Endothelial cell of umbilical vein (primary cell): ENCODE measurements at regions of chr3 and their contacts with region 1.

Region 1: DNA sequence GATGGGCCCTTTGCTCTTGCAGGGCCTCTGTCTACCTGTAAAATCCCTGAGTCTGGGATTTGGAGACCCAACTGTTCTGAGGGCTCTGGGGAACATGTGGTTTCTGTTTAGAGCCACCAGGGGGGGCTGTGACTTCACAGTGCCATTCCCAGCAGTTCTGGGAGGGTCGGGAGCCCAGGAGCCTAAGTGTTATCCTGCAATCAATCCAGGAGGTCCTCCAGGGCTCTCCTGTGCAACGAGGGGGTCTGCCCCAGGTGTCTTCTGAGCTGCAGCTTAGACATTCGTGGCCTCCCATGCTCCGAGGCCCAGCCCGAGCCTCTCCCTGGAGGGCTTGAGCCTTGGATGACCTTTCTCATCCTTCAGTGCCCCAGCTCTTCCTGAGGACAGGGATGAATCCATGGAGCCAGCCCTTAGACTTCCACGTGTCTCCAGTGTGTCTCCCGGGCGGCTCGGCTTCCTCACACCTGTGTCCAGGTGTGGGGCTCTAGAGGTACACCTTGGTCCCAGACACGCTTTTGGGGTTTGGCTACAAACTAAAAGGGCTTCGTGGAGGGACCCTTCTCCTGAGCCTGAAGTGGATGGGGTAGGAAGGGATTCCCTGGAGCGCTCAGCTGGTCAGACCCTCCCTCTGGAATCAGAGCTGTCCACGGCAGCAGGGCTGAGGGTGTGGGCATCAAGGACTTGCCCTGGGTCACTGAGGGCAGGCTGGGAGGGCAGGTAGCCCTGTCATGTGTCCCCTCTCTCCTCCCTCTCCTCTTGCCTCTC is 20.3 kb upstream of the ABTB1 start:
- DNase-seq: peak; percentile 57
- H3K4me3 ChIP-seq: no peak overlapping the region
- H3K27ac ChIP-seq: no peak overlapping the region
- H3K4me1 ChIP-seq: no peaks in the 10 kb centered on the region
- H3K27me3 ChIP-seq: peaks cover 0 to 4% of the 10 kb centered on the region in 2 experiments
- CTCF ChIP-seq: peak; percentile 84 to 88
- POLR2A ChIP-seq: no peak

Region 2: GRCh38 chr3:127831723-127832172 is 179.3 kb after region 1 on chr3:
- CTCF ChIA-PET with region 1: interaction called, 12 read pairs
- POLR2A ChIA-PET with region 1: no interaction called
- dilution Hi-C with region 1: no loop called
- intact Hi-C with region 1: loop called (anchors 1 kb)
- DNase-seq: peak; percentile 35
- H3K4me3 ChIP-seq: no peak overlapping the region
- H3K27ac ChIP-seq: no peak overlapping the region
- H3K4me1 ChIP-seq: no peaks in the 10 kb centered on the region
- H3K27me3 ChIP-seq: no peaks in the 10 kb centered on the region
- CTCF ChIP-seq: peak; percentile 73 to 82
- POLR2A ChIP-seq: no peak

Region 3: DNA sequence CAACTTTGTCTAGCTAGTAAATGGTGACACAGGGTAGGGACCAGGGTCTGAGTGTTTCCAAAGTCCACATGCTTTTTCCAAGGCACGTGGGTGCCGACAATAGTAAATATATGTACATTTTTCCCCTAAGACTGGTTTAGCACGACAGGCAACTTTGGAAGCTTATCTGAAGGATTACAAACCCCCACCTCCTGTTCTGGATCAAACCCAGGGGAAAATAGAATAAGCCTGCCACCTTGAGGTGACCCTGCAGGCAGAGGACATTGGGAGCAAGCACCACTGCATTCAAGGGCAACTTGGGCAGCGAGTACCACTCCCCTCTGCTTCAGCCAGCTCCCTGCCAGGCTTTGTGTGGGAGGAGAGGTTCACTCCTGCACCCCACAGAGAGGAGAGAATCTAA is 307.4 kb after region 1 on chr3:
- CTCF ChIA-PET with region 1: interaction called, 41 read pairs
- POLR2A ChIA-PET with region 1: no interaction called
- dilution Hi-C with region 1: no loop called
- intact Hi-C with region 1: loop called (anchors 1 kb)
- DNase-seq: peak; percentile 31
- H3K4me3 ChIP-seq: no peak overlapping the region
- H3K27ac ChIP-seq: no peak overlapping the region
- H3K4me1 ChIP-seq: no peaks in the 10 kb centered on the region
- H3K27me3 ChIP-seq: peaks cover 0 to 11% of the 10 kb centered on the region in 2 experiments
- CTCF ChIP-seq: peak in 1 of 2 donors; percentile 25
- POLR2A ChIP-seq: no peak

Region 4: DNA sequence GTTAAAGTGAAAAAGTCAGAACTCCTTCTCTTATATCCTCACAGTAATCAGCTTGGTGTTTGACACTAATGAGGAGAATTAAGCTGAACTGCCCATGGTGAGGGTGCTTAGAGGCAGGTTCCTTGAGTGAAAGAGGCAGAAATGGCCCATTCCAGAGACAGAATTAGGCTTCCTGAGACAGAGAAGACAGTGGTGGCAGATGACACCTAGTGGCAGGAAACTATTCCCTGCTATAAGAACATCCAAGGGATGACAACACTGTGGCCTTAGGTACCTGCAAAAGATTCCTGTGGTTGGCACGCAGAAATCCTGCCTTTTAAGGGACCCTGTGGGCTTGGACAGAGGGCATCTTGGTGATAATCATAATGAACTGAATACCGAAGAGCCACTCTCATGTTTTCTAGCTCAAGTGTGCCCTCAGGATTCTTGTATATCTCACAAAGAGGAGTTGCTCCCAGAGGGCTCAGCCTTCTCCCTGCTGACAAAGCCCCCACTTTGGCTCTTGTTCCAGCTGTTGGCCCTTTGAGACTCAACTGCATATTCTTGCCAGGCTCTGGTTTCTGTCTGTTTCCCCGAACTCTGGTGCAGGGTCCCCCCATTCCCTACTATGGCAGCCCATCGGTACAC is 318.7 kb after region 1 on chr3:
- CTCF ChIA-PET with region 1: interaction called, 17 read pairs
- POLR2A ChIA-PET with region 1: no interaction called
- dilution Hi-C with region 1: no loop called
- intact Hi-C with region 1: loop called (anchors 1 kb)
- DNase-seq: peak; percentile 27
- H3K4me3 ChIP-seq: no peak overlapping the region
- H3K27ac ChIP-seq: no peak overlapping the region
- H3K4me1 ChIP-seq: no peaks in the 10 kb centered on the region
- H3K27me3 ChIP-seq: peaks cover 37 to 77% of the 10 kb centered on the region in 2 experiments
- CTCF ChIP-seq: peak; percentile 35 to 53
- POLR2A ChIP-seq: no peak

Region 5: GRCh38 chr3:128051837-128052594 is 399.6 kb after region 1 on chr3 and contains the start of gene SEC61A1:
- CTCF ChIA-PET with region 1: no interaction called
- POLR2A ChIA-PET with region 1: no interaction called
- dilution Hi-C with region 1: no loop called
- intact Hi-C with region 1: loop called (anchors 2 kb)
- DNase-seq: peak; percentile 95
- H3K4me3 ChIP-seq: peak within 1 kb of the TSS; percentile 90 to 99 (median 99)
- H3K27ac ChIP-seq: peak within 1 kb of the TSS; percentile 92
- H3K4me1 ChIP-seq: peaks cover 39% of the 10 kb centered on the region
- H3K27me3 ChIP-seq: peaks cover 5 to 14% of the 10 kb centered on the region in 2 experiments
- CTCF ChIP-seq: no peak
- POLR2A ChIP-seq: peak; percentile 75
- total RNA-seq, gene SEC61A1: 280 and 312 TPM in 2 replicates